ENCODE measurements at regions of chr11 and their contacts with region 1.

Region 1: GRCh38 chr11:43358801-43359421 is at the start of gene TTC17:
- DNase-seq: peak; percentile 86 to 95 (median 90)
- ATAC-seq: peak; percentile 96
- H3K4me3 Mint-ChIP-seq: peak within 1 kb of the TSS; percentile 95 to 100 (median 98)
- H3K27ac Mint-ChIP-seq: peak within 1 kb of the TSS; percentile 90 to 99 (median 98)
- H3K4me1 Mint-ChIP-seq: peaks cover 23 to 51% (median 38%) of the 10 kb centered on the region in 4 donors
- H3K27me3 Mint-ChIP-seq: no peaks in the 10 kb centered on the region
- polyA plus RNA-seq, gene TTC17: 43.7 to 54.6 (median 48.4) TPM

Region 2: GRCh38 chr11:43282607-43283440 is 76.1 kb before region 1 on chr11:
- POLR2A ChIA-PET with region 1: no interaction called
- DNase-seq: peak in 9 of 10 donors; percentile 2 to 28 (median 24)
- ATAC-seq: no peak
- H3K4me3 Mint-ChIP-seq: no peak overlapping the region
- H3K27ac Mint-ChIP-seq: no peak overlapping the region
- H3K4me1 Mint-ChIP-seq: no peaks in the 10 kb centered on the region
- H3K27me3 Mint-ChIP-seq: peaks cover 2 to 29% (median 19%) of the 10 kb centered on the region in 5 donors

Region 3: GRCh38 chr11:43311791-43312607 is 46.9 kb before region 1 on chr11 and contains the start of gene API5:
- POLR2A ChIA-PET with region 1: interaction called, 38 read pairs
- DNase-seq: peak; percentile 82 to 95 (median 91)
- ATAC-seq: peak; percentile 92 to 96
- H3K4me3 Mint-ChIP-seq: peak within 1 kb of the TSS; percentile 92 to 99 (median 96)
- H3K27ac Mint-ChIP-seq: peak within 1 kb of the TSS; percentile 90 to 98 (median 96)
- H3K4me1 Mint-ChIP-seq: peaks cover 24 to 51% (median 49%) of the 10 kb centered on the region in 4 donors
- H3K27me3 Mint-ChIP-seq: no peaks in the 10 kb centered on the region
- polyA plus RNA-seq, gene API5: 139 to 146 (median 143) TPM

Measured in naive thymus-derived CD8-positive, alpha-beta T cell (primary cell).